Ascending aorta (tissue), 2 donors: ENCODE measurements at regions of chr18 and their contacts with region 1.

Region 1: DNA sequence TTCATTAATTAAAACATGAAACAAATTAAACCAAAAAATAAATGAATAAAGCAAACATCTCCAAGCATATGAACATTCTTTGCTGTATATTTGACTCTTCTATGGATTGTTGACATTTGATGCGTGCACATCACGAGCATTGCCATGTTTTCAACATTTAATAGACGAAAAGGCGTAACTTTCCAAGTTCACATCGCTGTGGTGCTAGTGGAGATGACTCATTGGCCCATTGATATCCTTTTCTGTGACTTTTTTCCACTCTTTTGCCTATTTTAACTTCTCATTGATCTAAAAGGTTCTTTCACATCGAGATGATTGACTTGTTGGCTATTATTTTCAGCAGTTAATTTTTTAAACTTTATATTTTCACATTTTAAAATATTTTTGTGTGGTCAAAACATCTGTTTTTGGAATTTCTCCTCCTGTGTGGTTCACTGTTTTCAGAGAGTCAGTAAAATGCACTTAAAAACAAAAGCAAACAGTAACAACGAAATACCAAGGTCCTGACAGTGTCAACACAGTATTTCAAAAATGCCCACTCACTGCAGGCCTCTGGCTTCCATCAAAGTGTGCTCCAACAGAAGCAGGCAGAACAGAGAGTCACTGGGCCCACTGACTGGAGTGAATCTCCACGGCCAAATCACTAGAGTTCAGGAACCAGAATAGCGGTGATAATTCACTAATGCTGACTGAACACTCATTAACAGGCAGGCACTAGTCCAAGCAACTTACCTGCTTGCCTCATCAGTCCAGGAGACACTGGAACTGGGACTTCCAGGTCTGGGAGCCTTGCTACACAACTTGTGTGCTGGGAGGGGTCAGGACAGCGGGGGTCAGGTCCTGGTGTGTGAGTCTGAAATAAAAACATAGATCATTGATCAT is 372.2 kb upstream of the SMIM21 start:
- DNase-seq: no peak
- H3K4me3 ChIP-seq: no peak overlapping the region
- H3K27ac ChIP-seq: no peak overlapping the region
- H3K4me1 ChIP-seq: no peaks in the 10 kb centered on the region
- H3K27me3 ChIP-seq: no peaks in the 10 kb centered on the region
- CTCF ChIP-seq: no peak

Region 2: DNA sequence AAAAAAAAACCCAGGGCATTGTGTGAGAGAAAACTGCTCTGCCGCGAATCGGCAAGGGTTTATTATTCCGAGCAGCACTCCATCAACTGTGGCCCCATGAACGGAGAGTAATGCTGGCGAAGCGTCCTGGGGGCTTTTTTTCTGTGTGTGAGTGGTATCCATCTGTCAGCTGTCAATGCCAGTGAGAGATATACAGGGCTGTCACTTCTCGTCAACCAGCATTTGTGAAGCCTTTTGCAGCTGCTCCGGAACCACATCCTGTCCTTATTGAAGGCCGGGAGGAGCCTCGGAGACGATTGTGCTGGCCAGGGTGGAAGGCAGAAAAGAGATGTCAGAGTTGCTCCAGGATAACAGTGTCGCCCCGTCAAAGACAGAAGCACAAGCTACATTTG is 15.3 kb before region 1 on chr18:
- intact Hi-C with region 1: loop called (anchors 1 kb)
- DNase-seq: no peak
- H3K4me3 ChIP-seq: no peak overlapping the region
- H3K27ac ChIP-seq: no peak overlapping the region
- H3K4me1 ChIP-seq: no peaks in the 10 kb centered on the region
- H3K27me3 ChIP-seq: no peaks in the 10 kb centered on the region
- CTCF ChIP-seq: no peak